Naive thymus-derived CD4-positive, alpha-beta T cell (primary cell): ENCODE measurements at regions of chr13 and their contacts with region 1.

Region 1: DNA sequence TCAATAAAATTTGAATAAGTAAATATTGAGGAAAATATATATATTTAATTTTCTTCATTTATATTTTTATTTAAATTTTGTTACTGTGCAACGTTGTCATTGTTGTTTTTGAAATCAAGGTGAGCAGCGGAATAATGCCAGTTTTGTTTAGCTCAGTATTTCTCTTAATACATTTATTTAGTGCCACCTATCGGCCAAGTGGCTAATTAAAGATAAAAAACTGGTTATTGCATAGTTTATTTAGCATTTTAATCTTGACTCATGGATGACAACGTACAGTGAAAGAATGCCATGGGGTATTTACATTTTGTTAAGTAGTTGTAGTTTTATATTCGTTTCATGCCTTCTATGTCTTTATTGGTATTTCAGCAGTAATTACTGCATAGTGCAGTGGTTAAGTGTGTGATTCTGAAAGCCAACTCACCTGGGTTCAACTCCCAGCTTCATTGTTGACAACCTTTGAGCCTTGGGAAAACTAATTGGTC is 265.9 kb downstream of the MYO16 start:
- DNase-seq: peak in 5 of 9 donors; percentile 10 to 25 (median 21)
- ATAC-seq: no peak
- H3K4me3 ChIP-seq: no peak overlapping the region
- H3K4me3 Mint-ChIP-seq: no peak overlapping the region
- H3K27ac ChIP-seq: no peak overlapping the region
- H3K27ac Mint-ChIP-seq: no peak overlapping the region
- H3K4me1 ChIP-seq: peaks cover 0 to 5% of the 10 kb centered on the region in 2 donors
- H3K4me1 Mint-ChIP-seq: peaks cover 0 to 16% (median 6%) of the 10 kb centered on the region in 7 donors
- H3K27me3 ChIP-seq: no peaks in the 10 kb centered on the region
- H3K27me3 Mint-ChIP-seq: peaks cover 5 to 24% (median 7%) of the 10 kb centered on the region in 5 donors

Region 2: GRCh38 chr13:107205303-107206104 is 1689.8 kb before region 1 on chr13:
- CTCF ChIA-PET with region 1: no interaction called
- POLR2A ChIA-PET with region 1: no interaction called
- intact Hi-C with region 1: loop called in 1 of 2 experiments (anchors 5 kb)
- DNase-seq: peak; percentile 9 to 56 (median 39)
- ATAC-seq: peak; percentile 76
- H3K4me3 ChIP-seq: no peak overlapping the region
- H3K4me3 Mint-ChIP-seq: no peak overlapping the region
- H3K27ac ChIP-seq: no peak overlapping the region
- H3K27ac Mint-ChIP-seq: no peak overlapping the region
- H3K4me1 ChIP-seq: no peaks in the 10 kb centered on the region
- H3K4me1 Mint-ChIP-seq: peaks cover 0 to 3% (median 0%) of the 10 kb centered on the region in 7 donors
- H3K27me3 ChIP-seq: no peaks in the 10 kb centered on the region
- H3K27me3 Mint-ChIP-seq: peaks cover 0 to 16% (median 0%) of the 10 kb centered on the region in 5 donors

Region 3: DNA sequence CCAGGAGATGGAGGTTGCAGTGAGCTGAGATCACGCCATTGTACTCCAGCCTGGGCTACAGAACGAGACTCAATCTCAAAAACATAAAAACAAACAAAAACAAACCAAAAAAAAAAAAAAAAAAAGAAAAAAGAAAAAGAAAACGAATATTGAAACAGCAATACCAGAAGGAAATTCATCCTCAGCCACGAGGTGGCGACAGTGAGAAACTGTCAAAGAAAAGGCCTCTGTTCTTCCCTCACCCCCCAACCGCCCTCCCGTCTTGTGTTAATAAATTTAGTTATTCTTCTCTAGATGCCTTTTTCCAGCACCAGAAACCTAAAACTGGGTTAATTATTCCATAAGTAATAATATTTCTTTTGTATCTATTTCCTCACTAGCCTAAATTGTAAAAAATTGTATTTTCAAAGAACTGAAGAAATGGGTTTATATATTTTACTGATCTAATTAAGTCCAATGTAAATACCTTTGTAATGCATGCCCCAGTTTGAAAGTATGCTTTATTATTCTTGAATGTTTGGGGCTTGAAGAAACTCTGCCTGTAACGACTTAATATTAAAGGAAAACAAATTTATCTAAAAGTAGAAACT is 718.5 kb before region 1 on chr13:
- CTCF ChIA-PET with region 1: interaction called, 5 read pairs
- POLR2A ChIA-PET with region 1: no interaction called
- intact Hi-C with region 1: loop called (anchors 1 to 2 kb)
- DNase-seq: peak in 8 of 9 donors; percentile 18 to 51 (median 36)
- ATAC-seq: peak; percentile 37
- H3K4me3 ChIP-seq: no peak overlapping the region
- H3K4me3 Mint-ChIP-seq: no peak overlapping the region
- H3K27ac ChIP-seq: no peak overlapping the region
- H3K27ac Mint-ChIP-seq: no peak overlapping the region
- H3K4me1 ChIP-seq: no peaks in the 10 kb centered on the region
- H3K4me1 Mint-ChIP-seq: no peaks in the 10 kb centered on the region
- H3K27me3 ChIP-seq: no peaks in the 10 kb centered on the region
- H3K27me3 Mint-ChIP-seq: peaks cover 0 to 12% (median 2%) of the 10 kb centered on the region in 5 donors

Region 4: DNA sequence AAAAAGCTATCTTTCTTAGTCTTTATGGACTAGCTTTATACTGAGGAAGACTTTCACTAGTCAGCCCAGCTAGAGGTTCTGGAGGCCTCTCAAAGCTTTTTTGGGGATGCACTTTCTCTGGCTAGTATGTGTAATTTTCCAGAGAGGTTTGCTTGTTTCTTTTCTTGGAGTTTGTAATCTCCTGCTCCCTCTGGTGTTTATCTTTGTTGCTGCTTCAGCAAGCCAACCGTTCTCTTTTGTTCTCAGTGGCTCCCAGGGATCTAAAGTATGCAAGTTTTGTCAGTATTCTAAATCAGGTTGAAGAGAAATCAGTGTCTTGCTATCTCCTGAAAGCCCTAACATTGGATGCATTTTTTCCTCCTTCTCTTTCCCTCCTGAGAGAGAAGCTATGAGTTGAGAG is 387.0 kb before region 1 on chr13:
- CTCF ChIA-PET with region 1: interaction called, 3 read pairs
- POLR2A ChIA-PET with region 1: no interaction called
- intact Hi-C with region 1: loop called in 1 of 2 experiments (anchors 5 kb)
- DNase-seq: peak in 4 of 9 donors; percentile 9 to 27 (median 13)
- ATAC-seq: no peak
- H3K4me3 ChIP-seq: no peak overlapping the region
- H3K4me3 Mint-ChIP-seq: no peak overlapping the region
- H3K27ac ChIP-seq: no peak overlapping the region
- H3K27ac Mint-ChIP-seq: no peak overlapping the region
- H3K4me1 ChIP-seq: no peaks in the 10 kb centered on the region
- H3K4me1 Mint-ChIP-seq: peaks cover 0 to 5% (median 0%) of the 10 kb centered on the region in 7 donors
- H3K27me3 ChIP-seq: no peaks in the 10 kb centered on the region
- H3K27me3 Mint-ChIP-seq: no peaks in the 10 kb centered on the region

Region 5: GRCh38 chr13:109010912-109011311 is 115.7 kb after region 1 on chr13:
- CTCF ChIA-PET with region 1: no interaction called
- POLR2A ChIA-PET with region 1: no interaction called
- intact Hi-C with region 1: no loop called
- DNase-seq: no peak
- ATAC-seq: no peak
- H3K4me3 ChIP-seq: no peak overlapping the region
- H3K4me3 Mint-ChIP-seq: no peak overlapping the region
- H3K27ac ChIP-seq: no peak overlapping the region
- H3K27ac Mint-ChIP-seq: no peak overlapping the region
- H3K4me1 ChIP-seq: no peaks in the 10 kb centered on the region
- H3K4me1 Mint-ChIP-seq: no peaks in the 10 kb centered on the region
- H3K27me3 ChIP-seq: no peaks in the 10 kb centered on the region
- H3K27me3 Mint-ChIP-seq: peaks cover 0 to 19% (median 3%) of the 10 kb centered on the region in 5 donors